Activated CD8-positive, alpha-beta T cell treated with anti-CD3 and anti-CD28 coated beads, Interleukin-2, amount 10 ng/mL, durations not matched to agents 7 days and 5 days (primary cell): ENCODE measurements at regions of chrX and their contacts with region 1.

Region 1: DNA sequence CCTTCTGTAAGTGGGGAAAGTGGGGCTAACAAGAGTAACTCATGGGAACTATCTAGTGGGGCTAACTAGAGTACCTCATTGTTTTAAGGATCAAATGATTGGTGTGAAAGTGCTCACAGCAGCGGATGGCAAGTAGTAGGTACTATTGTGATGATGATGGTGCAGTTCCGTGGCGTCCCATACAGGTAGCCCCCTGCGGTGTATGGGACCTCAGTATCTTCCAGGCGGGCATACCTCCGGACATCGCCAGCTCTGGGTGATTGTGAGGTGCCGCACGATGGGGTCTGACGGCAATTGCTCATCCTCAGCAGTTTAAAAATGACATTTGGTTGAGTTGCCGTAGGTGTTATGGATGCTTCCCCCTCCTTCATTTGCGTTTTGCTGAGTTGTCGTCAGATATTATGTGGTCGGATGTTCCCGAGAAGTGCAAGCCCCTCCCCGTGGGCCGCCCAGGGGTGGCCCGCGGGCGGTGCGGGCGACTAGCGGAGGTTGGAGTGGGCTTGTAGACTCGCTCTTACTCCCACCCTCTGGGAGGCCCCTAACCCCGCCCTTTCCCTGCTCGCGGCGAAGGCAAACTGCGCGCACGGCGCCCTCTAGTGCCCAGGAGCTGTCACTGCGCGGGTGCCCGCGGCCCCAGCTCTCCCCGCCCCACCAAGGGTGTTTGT is 18.3 kb upstream of the GPR101 start:
- DNase-seq: peak; percentile 82
- ATAC-seq: peak; percentile 97
- H3K4me3 Mint-ChIP-seq: peak overlapping the region; percentile 81
- H3K27ac Mint-ChIP-seq: no peak overlapping the region
- H3K4me1 Mint-ChIP-seq: peaks cover 10% of the 10 kb centered on the region
- H3K27me3 Mint-ChIP-seq: peaks cover 37% of the 10 kb centered on the region

Region 2: GRCh38 chrX:137031517-137032340 is 20.4 kb before region 1 on chrX:
- CTCF ChIA-PET with region 1: interaction called, 11 read pairs
- POLR2A ChIA-PET with region 1: no interaction called
- DNase-seq: peak; percentile 54
- ATAC-seq: peak; percentile 85
- H3K4me3 Mint-ChIP-seq: no peak overlapping the region
- H3K27ac Mint-ChIP-seq: no peak overlapping the region
- H3K4me1 Mint-ChIP-seq: peaks cover 6% of the 10 kb centered on the region
- H3K27me3 Mint-ChIP-seq: peaks cover 53% of the 10 kb centered on the region

Region 3: DNA sequence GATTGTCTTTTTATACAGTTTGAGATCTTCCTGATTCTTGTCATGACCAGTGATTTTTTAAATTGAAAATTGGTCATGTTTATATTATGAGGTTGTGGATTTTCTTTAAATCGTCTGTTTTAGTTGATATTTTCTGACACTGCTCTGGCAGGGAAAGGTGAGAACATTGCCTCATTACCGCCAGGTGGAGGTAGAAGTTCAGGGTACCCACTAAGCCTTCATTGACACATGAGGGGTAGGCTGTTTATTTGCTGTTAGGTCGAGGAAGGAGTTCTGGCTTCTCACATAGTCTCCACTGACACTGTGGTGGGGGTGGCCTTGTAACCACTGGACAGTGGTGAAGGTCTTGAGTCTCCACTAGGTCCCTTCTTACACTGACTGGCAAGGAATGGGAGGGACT is 99.3 kb after region 1 on chrX:
- CTCF ChIA-PET with region 1: no interaction called
- POLR2A ChIA-PET with region 1: no interaction called
- DNase-seq: no peak
- ATAC-seq: no peak
- H3K4me3 Mint-ChIP-seq: no peak overlapping the region
- H3K27ac Mint-ChIP-seq: no peak overlapping the region
- H3K4me1 Mint-ChIP-seq: no peaks in the 10 kb centered on the region
- H3K27me3 Mint-ChIP-seq: no peaks in the 10 kb centered on the region